Spleen (tissue), 13 donors: ENCODE measurements at regions of chr5 and their contacts with region 1.

Region 1: GRCh38 chr5:146965761-146966659 is 87.5 kb upstream of the PPP2R2B start:
- DNase-seq: no peak
- H3K4me3 ChIP-seq: no peak overlapping the region
- H3K27ac ChIP-seq: no peak overlapping the region
- H3K4me1 ChIP-seq: peaks cover 0 to 6% (median 0%) of the 10 kb centered on the region in 6 donors
- H3K27me3 ChIP-seq: no peaks in the 10 kb centered on the region
- CTCF ChIP-seq: peak; percentile 78 to 93 (median 89)
- POLR2A ChIP-seq: no peak

Region 2: DNA sequence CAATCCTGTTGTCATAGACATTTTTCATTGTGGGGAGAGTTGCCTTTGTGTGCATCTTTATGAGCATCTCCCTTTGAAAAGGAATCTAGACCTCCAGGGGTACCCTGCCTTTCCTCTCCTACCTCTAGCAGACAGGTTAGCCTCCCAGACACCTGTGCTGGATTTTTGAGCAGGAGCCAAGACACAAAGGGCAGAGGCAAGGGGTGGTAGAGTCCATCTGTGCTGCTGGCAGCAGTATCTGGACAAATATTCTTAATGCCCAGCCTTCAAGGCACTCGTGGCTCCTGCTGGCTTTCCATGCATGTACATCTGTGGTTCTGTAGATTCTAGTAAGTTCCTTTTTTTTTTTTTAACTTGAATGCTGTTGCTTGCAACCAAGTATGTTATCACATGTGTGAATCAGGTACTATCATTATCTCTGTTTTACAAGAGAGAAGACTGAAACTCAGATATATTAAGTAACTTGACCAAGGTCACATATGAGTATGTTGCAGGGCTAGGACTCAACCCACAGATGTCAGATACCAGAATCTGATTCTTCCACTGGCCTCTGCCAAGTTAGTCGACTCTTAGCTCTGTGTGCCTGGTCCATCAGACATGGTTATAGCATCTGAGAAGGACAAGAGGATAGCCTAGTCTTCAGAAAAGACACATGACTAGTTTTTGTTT is 417.1 kb before region 1 on chr5:
- intact Hi-C with region 1: loop called (anchors 5 kb)
- DNase-seq: no peak
- H3K4me3 ChIP-seq: no peak overlapping the region
- H3K27ac ChIP-seq: no peak overlapping the region
- H3K4me1 ChIP-seq: no peaks in the 10 kb centered on the region
- H3K27me3 ChIP-seq: no peaks in the 10 kb centered on the region
- CTCF ChIP-seq: no peak
- POLR2A ChIP-seq: no peak

Region 3: DNA sequence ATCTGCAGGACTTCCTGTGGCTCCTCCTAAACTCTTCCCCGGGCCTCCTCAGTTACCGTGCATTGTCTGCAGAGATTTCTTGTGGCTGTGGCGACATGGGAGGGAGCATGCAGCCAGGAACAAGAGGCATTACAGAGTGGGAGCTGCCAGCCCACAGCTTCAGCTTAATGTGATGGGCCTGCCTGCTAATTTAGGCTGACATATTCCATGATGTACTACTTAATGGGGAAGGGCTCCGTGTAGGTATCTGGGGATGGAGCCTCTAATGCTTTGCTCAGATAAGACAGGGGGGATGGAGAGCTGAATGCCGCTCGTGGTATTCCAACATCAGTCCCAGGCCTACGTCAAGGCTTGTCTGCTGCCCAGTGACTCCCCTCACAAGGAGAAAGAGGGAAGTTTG is 312.4 kb before region 1 on chr5:
- intact Hi-C with region 1: loop called (anchors 10 kb)
- DNase-seq: no peak
- H3K4me3 ChIP-seq: no peak overlapping the region
- H3K27ac ChIP-seq: no peak overlapping the region
- H3K4me1 ChIP-seq: no peaks in the 10 kb centered on the region
- H3K27me3 ChIP-seq: no peaks in the 10 kb centered on the region
- CTCF ChIP-seq: no peak
- POLR2A ChIP-seq: no peak

Region 4: DNA sequence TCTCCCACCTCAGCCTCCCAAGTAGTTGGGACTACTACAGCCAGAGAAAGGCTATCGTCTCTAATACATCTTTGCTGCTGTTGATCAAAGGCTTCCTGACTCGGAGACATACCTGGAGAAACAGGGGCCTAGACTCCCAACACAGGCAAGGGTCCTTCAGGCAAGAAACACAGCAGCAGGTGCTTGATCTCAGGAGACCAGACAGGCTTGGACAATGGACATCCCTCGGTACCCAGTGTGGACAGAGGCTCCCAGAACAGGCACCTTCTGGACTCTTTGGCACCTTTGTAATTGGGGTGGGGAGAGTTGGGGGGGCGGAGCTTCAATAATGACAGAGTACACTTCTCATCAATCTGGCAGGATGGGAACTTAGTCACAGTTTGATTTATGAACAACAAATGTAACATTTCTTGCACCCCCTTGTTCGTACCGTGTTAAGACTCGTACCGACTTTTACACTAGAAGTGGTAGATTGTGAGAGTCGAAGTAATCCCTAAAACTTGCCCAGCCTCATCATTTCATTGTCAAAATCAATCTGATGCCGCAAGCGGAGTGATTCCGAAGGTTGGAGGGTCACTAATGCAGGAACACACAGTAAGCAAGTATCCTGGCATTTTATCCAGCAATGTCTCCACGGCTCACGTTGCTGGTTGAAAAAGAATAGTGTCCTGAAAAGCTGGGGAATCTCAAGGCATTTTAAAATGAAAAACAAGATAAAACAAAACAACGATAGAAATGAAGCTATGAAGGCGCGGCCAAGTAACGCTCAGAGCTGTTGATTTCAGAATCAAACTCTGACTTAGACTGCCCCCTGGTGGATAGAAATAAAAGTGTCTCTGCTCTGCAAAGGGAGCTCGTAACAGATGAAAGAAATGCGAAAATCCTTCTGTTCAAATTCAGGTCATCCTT is 222.4 kb after region 1 on chr5:
- intact Hi-C with region 1: loop called (anchors 10 kb)
- DNase-seq: no peak
- H3K4me3 ChIP-seq: no peak overlapping the region
- H3K27ac ChIP-seq: no peak overlapping the region
- H3K4me1 ChIP-seq: peaks cover 0 to 7% (median 3%) of the 10 kb centered on the region in 6 donors
- H3K27me3 ChIP-seq: peaks cover 0 to 9% (median 0%) of the 10 kb centered on the region in 7 donors
- CTCF ChIP-seq: peak; percentile 54 to 82 (median 76)
- POLR2A ChIP-seq: no peak

Region 5: GRCh38 chr5:147245381-147246165 is 279.6 kb after region 1 on chr5:
- intact Hi-C with region 1: no loop called
- DNase-seq: no peak
- H3K4me3 ChIP-seq: no peak overlapping the region
- H3K27ac ChIP-seq: no peak overlapping the region
- H3K4me1 ChIP-seq: no peaks in the 10 kb centered on the region
- H3K27me3 ChIP-seq: no peaks in the 10 kb centered on the region
- CTCF ChIP-seq: no peak
- POLR2A ChIP-seq: no peak